MCF 10A (cell line): ENCODE measurements at regions of chr2 and their contacts with region 1.

Region 1: GRCh38 chr2:16773080-16773713 is 107.6 kb upstream of the CYRIA start:
- DNase-seq: peak; percentile 74
- H3K4me3 Mint-ChIP-seq: no peak overlapping the region
- H3K27ac Mint-ChIP-seq: no peak overlapping the region
- H3K4me1 Mint-ChIP-seq: peaks cover 10% of the 10 kb centered on the region
- H3K27me3 Mint-ChIP-seq: peaks cover 21% of the 10 kb centered on the region
- CTCF ChIP-seq: peak; percentile 73

Region 2: GRCh38 chr2:16784652-16785051 is 11.5 kb after region 1 on chr2:
- CTCF ChIA-PET with region 1: interaction called, 15 read pairs
- POLR2A ChIA-PET with region 1: interaction called, 3 read pairs
- intact Hi-C with region 1: no loop called
- DNase-seq: no peak
- H3K4me3 Mint-ChIP-seq: no peak overlapping the region
- H3K27ac Mint-ChIP-seq: no peak overlapping the region
- H3K4me1 Mint-ChIP-seq: no peaks in the 10 kb centered on the region
- H3K27me3 Mint-ChIP-seq: no peaks in the 10 kb centered on the region
- CTCF ChIP-seq: no peak

Region 3: DNA sequence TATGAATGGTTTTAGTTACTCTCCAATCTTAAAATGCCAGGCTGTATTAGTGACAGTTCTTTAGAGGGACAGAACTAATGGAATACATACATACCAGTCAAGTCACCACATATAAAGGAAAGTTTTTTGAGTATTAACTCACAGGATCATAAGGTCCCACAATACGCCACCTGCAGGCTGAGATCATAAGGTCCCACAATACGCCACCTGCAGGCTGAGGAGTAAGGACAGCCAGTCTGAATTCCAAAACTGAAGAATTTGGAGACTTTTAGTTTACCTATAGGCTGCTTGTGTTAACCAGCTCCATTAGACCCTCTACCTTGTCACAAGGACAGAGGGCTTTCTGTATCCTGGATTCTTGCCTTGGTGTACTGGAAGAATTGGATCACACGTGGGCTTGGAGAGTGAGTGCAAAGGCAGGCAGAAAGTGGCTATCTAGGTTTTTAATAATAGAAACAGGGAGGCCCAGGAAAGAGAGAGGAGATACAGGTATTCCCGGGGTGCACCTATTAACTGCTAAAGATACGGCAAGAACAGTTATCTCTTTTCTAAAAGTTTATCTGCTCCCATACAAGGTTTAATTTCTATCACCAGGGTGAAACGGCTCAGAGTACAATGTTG is 127.3 kb after region 1 on chr2:
- CTCF ChIA-PET with region 1: interaction called, 5 read pairs
- POLR2A ChIA-PET with region 1: no interaction called
- intact Hi-C with region 1: loop called (anchors 1 kb)
- DNase-seq: peak; percentile 73
- H3K4me3 Mint-ChIP-seq: no peak overlapping the region
- H3K27ac Mint-ChIP-seq: no peak overlapping the region
- H3K4me1 Mint-ChIP-seq: no peaks in the 10 kb centered on the region
- H3K27me3 Mint-ChIP-seq: no peaks in the 10 kb centered on the region
- CTCF ChIP-seq: peak; percentile 46

Region 4: DNA sequence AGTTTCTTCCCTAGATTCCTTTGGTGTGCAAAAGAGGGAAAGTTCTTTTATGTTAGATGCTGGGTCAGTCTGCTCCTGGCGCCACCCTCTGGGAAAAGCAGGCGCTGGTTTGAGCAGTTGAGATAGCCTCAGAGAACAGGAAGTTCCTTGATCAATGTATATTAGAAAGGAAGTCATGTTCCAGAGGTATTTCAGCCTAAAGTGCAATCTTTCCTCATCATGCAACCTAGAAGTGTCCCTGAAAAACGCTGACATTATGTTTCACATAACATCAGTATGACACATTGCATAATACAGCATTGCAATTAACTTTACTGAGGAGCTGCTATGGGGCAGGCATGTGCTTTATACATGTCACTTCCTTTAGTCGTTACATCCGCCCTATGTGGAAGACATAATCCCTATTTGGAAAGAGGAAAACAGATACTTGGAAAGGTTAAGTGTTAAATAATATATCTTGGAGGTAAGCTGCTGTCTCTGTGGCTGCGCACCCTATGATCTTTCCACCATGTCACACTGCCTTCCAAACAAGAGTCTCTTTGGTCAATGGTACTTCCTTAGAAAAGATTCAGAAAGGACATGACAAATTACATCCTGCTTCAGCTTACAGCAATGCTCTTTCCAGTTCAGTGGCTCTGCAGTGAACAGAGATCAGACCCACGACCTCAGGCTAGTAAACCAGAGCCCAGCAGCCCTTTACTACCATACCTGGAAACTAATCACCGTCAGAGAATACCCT is 375.4 kb after region 1 on chr2:
- CTCF ChIA-PET with region 1: interaction called, 28 read pairs
- POLR2A ChIA-PET with region 1: no interaction called
- intact Hi-C with region 1: loop called (anchors 1 kb)
- DNase-seq: peak; percentile 38
- H3K4me3 Mint-ChIP-seq: no peak overlapping the region
- H3K27ac Mint-ChIP-seq: no peak overlapping the region
- H3K4me1 Mint-ChIP-seq: no peaks in the 10 kb centered on the region
- H3K27me3 Mint-ChIP-seq: peaks cover 14% of the 10 kb centered on the region
- CTCF ChIP-seq: peak; percentile 25

Region 5: DNA sequence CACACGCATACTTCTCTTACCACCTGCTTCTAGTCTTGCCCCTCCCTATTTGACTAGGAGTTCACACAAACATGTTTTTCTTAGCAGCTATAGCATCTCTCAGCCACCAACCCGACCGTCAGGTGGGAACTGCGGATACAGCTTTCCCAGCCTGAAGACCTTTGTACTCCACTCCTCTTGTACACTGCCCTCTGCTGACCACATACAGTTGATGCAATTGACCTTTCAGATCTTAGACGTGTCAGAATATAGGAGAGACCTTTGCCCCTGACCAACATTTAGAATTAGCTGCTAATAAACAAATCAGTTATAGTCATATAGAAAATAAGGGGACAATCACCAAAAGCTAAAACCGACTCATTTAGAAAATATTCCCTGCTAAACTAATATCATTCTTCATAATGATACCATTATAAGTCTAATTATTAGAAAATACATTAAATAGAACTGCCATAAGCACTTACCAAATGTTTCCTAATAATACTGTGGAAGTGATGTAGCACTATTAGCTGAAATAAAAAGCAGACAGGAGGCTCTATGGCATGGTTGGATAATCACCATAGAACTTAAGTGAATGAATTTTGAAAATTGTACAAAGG is 536.6 kb after region 1 on chr2:
- CTCF ChIA-PET with region 1: interaction called, 160 read pairs
- POLR2A ChIA-PET with region 1: interaction called, 4 read pairs
- intact Hi-C with region 1: loop called (anchors 1 kb)
- DNase-seq: peak; percentile 83
- H3K4me3 Mint-ChIP-seq: no peak overlapping the region
- H3K27ac Mint-ChIP-seq: no peak overlapping the region
- H3K4me1 Mint-ChIP-seq: no peaks in the 10 kb centered on the region
- H3K27me3 Mint-ChIP-seq: no peaks in the 10 kb centered on the region
- CTCF ChIP-seq: peak; percentile 80

Region 6: DNA sequence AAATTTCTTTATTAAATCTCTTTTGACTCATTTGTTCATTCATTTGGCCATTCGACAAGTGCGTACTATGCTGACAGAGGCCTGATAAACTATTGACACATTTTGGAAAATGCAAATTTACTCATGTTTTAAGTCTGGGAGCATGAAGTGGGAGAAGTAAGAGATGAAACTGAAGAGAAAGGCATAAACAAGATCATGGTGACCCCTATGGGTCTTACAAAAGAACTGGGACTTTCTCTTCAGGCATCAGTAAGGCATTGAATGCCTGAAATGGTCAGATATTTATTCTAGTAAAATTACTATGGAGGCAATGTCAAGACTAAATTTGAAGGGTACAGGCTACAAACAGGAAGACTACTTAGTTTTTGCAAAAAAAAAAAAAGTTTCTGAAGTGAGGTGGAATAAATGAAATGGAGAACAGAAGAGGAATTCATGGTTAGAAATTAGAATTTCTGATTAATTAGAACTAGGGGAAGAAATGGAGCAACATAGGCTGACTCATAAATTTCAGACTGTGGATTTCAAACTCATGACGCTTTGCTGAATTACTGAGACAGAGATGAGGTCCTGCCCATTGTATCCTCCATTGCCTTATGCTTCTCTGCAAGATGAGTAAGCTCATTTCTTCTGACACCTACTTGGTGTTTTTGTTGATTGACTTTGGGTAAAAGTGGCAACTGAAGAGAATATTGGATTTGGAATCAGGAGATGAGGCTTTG is 800.0 kb after region 1 on chr2:
- CTCF ChIA-PET with region 1: interaction called, 3 read pairs
- POLR2A ChIA-PET with region 1: no interaction called
- intact Hi-C with region 1: loop called (anchors 2 kb)
- DNase-seq: peak; percentile 51
- H3K4me3 Mint-ChIP-seq: no peak overlapping the region
- H3K27ac Mint-ChIP-seq: no peak overlapping the region
- H3K4me1 Mint-ChIP-seq: peaks cover 9% of the 10 kb centered on the region
- H3K27me3 Mint-ChIP-seq: no peaks in the 10 kb centered on the region
- CTCF ChIP-seq: no peak

Region 7: GRCh38 chr2:17646081-17646554 is 872.9 kb after region 1 on chr2:
- CTCF ChIA-PET with region 1: interaction called, 8 read pairs
- POLR2A ChIA-PET with region 1: no interaction called
- intact Hi-C with region 1: loop called (anchors 10 kb)
- DNase-seq: peak; percentile 84
- H3K4me3 Mint-ChIP-seq: no peak overlapping the region
- H3K27ac Mint-ChIP-seq: no peak overlapping the region
- H3K4me1 Mint-ChIP-seq: peaks cover 31% of the 10 kb centered on the region
- H3K27me3 Mint-ChIP-seq: no peaks in the 10 kb centered on the region
- CTCF ChIP-seq: peak; percentile 73